T-cell (primary cell): ENCODE measurements at regions of chr10 and their contacts with region 1.

Region 1: DNA sequence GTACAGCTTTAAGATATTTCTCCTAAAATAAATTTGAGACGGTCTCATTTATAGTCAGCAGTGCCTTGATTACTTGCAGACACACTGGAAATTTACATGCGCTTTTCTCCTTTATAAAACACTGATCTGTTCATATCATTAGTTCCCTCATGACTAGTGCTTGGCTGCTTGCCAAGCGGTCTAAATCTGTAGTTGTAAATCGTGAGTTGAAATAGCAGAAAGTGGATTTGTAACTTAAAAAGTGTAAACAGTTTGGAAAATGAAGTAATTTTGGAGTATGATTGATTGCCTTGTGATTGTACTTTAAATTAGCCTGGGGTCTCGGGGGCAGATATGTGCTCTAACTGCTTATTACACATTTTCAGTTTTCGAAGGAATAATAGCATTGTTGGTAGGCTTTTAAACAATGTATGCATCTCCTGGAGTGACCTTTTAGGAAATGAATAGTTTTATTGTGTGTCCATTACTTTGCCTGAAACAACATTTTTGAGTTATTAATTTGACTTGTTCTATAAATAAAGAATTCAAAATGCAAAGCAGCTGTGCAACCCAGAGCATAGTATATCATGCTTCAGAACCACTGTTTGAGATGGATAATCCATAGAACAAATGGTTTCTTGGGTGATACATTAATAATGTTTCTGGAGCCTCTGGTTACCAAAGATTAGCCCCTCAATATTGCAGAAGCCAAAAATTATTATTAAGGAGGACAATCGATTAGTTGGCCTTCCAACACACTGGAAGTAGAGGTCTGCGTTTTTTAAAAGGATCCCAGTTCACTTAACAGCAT is 73.3 kb downstream of the ARID5B start:
- DNase-seq: no peak
- ATAC-seq: no peak
- H3K4me3 ChIP-seq: no peak overlapping the region
- H3K4me3 Mint-ChIP-seq: no peak overlapping the region
- H3K27ac ChIP-seq: no peak overlapping the region
- H3K27ac Mint-ChIP-seq: no peak overlapping the region
- H3K4me1 ChIP-seq: no peaks in the 10 kb centered on the region
- H3K4me1 Mint-ChIP-seq: peaks cover 29 to 43% (median 38%) of the 10 kb centered on the region in 3 donors
- H3K27me3 ChIP-seq: no peaks in the 10 kb centered on the region
- H3K27me3 Mint-ChIP-seq: no peaks in the 10 kb centered on the region

Region 2: DNA sequence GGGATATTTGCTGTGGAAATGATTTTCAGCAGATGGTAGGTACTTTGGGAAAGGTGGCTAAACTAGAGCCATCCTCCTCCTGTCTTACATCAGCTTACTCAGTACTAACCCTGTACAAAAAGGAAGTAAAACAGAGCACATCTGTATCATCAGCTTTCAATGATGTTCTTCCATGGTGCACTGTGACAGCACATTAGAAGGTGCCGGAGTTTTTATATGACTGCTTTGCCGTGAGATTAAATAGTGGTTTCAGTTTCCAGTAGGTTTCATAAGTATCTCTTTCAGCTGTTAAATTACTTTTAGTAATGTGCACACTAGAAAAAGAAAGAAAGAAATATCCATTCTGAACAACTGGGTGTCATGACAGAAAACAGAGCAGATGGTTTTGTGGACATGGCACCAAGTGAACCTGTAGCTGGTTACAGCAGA is 13.2 kb after region 1 on chr10:
- CTCF ChIA-PET with region 1: no interaction called
- POLR2A ChIA-PET with region 1: interaction called in 1 of 2 experiments, 10 read pairs
- DNase-seq: peak in 7 of 35 experiments; percentile 3 to 60 (median 23)
- ATAC-seq: peak; percentile 72 to 74 (median 72)
- H3K4me3 ChIP-seq: no peak overlapping the region
- H3K4me3 Mint-ChIP-seq: peak overlapping the region; percentile 10 to 47 (median 28)
- H3K27ac ChIP-seq: peak overlapping the region; percentile 52
- H3K27ac Mint-ChIP-seq: peak overlapping the region; percentile 91 to 94
- H3K4me1 ChIP-seq: peaks cover 3 to 18% of the 10 kb centered on the region in 2 experiments
- H3K4me1 Mint-ChIP-seq: peaks cover 66 to 88% (median 86%) of the 10 kb centered on the region in 3 donors
- H3K27me3 ChIP-seq: no peaks in the 10 kb centered on the region
- H3K27me3 Mint-ChIP-seq: no peaks in the 10 kb centered on the region

Region 3: DNA sequence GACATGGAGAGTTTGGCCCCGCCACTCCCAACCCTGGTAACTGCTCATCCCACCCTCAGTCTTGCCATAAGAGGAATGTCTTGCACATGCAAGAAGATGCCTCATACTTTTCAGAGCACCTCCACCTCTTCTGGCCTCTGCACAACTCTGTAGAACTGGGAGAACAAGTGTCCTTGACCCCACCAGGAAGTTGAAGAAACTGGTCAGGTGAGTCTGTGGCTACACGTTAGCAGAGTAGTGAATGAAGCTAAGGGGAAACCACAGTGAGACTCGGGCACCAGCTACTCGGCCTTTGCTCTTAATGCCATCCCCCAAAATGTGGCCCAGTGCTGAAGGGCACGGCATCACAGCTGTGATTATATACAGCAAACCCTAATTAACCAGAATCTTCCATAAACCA is 36.8 kb after region 1 on chr10:
- CTCF ChIA-PET with region 1: no interaction called
- POLR2A ChIA-PET with region 1: no interaction called
- DNase-seq: no peak
- ATAC-seq: no peak
- H3K4me3 ChIP-seq: no peak overlapping the region
- H3K4me3 Mint-ChIP-seq: no peak overlapping the region
- H3K27ac ChIP-seq: no peak overlapping the region
- H3K27ac Mint-ChIP-seq: peak overlapping the region; percentile 25 to 52
- H3K4me1 ChIP-seq: no peaks in the 10 kb centered on the region
- H3K4me1 Mint-ChIP-seq: peaks cover 43 to 60% (median 51%) of the 10 kb centered on the region in 3 donors
- H3K27me3 ChIP-seq: no peaks in the 10 kb centered on the region
- H3K27me3 Mint-ChIP-seq: no peaks in the 10 kb centered on the region

Region 4: DNA sequence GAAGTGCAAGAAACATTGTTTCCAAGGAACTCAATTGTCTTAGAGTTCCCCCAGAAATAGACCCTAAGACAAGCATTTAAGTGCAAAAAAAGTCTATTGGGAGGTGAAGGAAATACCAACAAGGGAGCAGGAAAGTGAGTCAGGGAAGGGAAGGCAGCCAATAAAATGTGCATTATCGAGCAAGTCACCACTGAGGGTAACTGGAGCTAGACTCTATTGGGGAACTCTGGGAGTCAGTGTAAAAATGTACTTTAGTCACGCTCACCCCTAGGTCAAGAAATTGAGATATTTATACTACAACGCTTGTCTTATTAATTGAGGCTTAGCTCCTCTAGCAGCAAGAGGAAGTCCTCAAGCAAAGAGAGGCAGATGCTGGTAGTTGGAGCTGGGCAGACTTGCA is 156.2 kb after region 1 on chr10:
- CTCF ChIA-PET with region 1: no interaction called
- POLR2A ChIA-PET with region 1: no interaction called
- DNase-seq: no peak
- ATAC-seq: no peak
- H3K4me3 ChIP-seq: no peak overlapping the region
- H3K4me3 Mint-ChIP-seq: no peak overlapping the region
- H3K27ac ChIP-seq: no peak overlapping the region
- H3K27ac Mint-ChIP-seq: no peak overlapping the region
- H3K4me1 ChIP-seq: peaks cover 0 to 2% of the 10 kb centered on the region in 2 experiments
- H3K4me1 Mint-ChIP-seq: peaks cover 5 to 17% (median 8%) of the 10 kb centered on the region in 3 donors
- H3K27me3 ChIP-seq: no peaks in the 10 kb centered on the region
- H3K27me3 Mint-ChIP-seq: no peaks in the 10 kb centered on the region